ENCODE measurements at regions of chr19 and their contacts with region 1.

Region 1: DNA sequence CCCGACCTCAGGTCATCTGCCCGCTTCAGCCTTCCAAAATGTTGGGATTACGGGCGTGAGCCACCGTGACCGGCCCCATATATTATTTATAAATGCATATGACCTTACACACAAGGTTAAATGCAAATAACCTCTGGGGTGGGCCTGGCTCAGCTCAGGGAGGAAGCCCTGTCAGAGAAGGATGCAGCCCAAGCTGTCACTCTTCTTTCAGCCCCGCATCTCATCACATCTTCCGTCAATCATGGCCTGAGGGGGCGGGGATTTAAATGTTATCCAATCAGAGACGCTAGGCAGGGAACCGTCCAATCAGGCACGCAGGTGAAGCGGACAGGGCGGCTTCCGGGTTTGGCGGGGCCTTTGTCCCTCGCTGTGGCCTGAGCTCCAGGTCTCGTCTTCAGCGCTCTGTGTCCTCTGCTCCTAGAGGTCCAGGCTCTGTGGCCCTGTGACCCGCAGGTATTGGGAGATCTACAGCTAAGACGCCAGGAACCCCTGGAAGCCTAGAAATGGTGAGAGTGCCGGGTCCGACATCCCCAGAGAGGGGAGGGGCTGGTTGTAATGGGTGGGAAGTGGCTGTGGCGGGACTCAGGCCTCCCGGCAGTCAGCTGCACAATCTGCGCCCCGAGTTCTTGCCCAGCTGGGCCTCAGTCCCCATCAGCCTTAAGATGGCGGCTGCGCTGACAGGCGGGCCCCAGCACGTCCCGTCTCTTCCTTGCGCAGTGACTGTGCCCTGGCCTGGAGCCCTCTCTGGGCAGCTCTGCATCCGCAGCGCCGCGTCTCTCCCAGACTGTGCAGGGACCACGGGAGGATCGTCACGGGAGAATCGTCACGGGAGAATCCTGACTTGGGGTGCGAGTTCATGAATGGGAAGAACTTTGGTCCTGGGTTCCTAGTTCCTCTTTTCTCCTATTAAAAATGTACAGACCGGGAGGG is at the start of gene ZNF430:
- DNase-seq: peak; percentile 97
- H3K4me3 Mint-ChIP-seq: peak within 1 kb of the TSS; percentile 100
- H3K27ac Mint-ChIP-seq: peak within 1 kb of the TSS; percentile 99
- H3K4me1 Mint-ChIP-seq: peaks cover 41% of the 10 kb centered on the region
- H3K27me3 Mint-ChIP-seq: no peaks in the 10 kb centered on the region
- total RNA-seq, gene ZNF430: 18.9 to 20.9 TPM

Region 2: GRCh38 chr19:20661150-20661819 is 359.3 kb before region 1 on chr19 and contains the start of gene ZNF626:
- CTCF ChIA-PET with region 1: no interaction called
- POLR2A ChIA-PET with region 1: interaction called, 5 read pairs
- intact Hi-C with region 1: loop called (anchors 10 kb)
- DNase-seq: peak; percentile 96
- H3K4me3 Mint-ChIP-seq: peak within 1 kb of the TSS; percentile 91
- H3K27ac Mint-ChIP-seq: peak within 1 kb of the TSS; percentile 90
- H3K4me1 Mint-ChIP-seq: peaks cover 43% of the 10 kb centered on the region
- H3K27me3 Mint-ChIP-seq: no peaks in the 10 kb centered on the region
- total RNA-seq, gene ZNF626: 8.7 to 12.5 TPM

Region 3: DNA sequence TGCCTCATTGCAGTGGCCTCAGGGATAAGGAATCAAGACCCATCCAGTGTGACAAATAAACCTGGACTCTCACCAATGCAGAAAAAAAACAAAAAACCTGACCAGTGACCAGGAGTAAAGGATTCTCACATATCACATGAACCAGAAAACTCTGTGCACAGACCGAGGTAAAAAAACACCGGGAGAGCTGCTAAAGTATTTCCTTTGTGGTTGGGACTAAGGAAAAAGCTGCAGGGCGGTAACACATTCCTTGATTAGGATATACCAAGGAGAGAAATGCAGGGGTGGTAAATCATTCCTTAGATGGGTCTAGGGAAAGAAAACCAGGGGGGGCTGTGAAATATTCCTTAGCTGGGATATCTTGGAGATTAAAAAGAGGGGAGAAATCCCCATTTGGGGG is 162.3 kb before region 1 on chr19:
- CTCF ChIA-PET with region 1: no interaction called
- POLR2A ChIA-PET with region 1: no interaction called
- intact Hi-C with region 1: no loop called
- DNase-seq: no peak
- H3K4me3 Mint-ChIP-seq: no peak overlapping the region
- H3K27ac Mint-ChIP-seq: no peak overlapping the region
- H3K4me1 Mint-ChIP-seq: no peaks in the 10 kb centered on the region
- H3K27me3 Mint-ChIP-seq: no peaks in the 10 kb centered on the region

Region 4: GRCh38 chr19:20923077-20923871 is 97.3 kb before region 1 on chr19 and contains the start of gene ZNF85:
- CTCF ChIA-PET with region 1: interaction called, 4 read pairs
- POLR2A ChIA-PET with region 1: interaction called, 9 read pairs
- intact Hi-C with region 1: loop called (anchors 1 kb)
- DNase-seq: peak; percentile 95
- H3K4me3 Mint-ChIP-seq: peak within 1 kb of the TSS; percentile 98
- H3K27ac Mint-ChIP-seq: peak within 1 kb of the TSS; percentile 94
- H3K4me1 Mint-ChIP-seq: peaks cover 23% of the 10 kb centered on the region
- H3K27me3 Mint-ChIP-seq: no peaks in the 10 kb centered on the region
- total RNA-seq, gene ZNF85: 15.4 to 18.5 TPM

Region 5: GRCh38 chr19:21047716-21048115 is 27.2 kb after region 1 on chr19:
- CTCF ChIA-PET with region 1: no interaction called
- POLR2A ChIA-PET with region 1: no interaction called
- intact Hi-C with region 1: no loop called
- DNase-seq: no peak
- H3K4me3 Mint-ChIP-seq: no peak overlapping the region
- H3K27ac Mint-ChIP-seq: no peak overlapping the region
- H3K4me1 Mint-ChIP-seq: peaks cover 8% of the 10 kb centered on the region
- H3K27me3 Mint-ChIP-seq: no peaks in the 10 kb centered on the region

Region 6: DNA sequence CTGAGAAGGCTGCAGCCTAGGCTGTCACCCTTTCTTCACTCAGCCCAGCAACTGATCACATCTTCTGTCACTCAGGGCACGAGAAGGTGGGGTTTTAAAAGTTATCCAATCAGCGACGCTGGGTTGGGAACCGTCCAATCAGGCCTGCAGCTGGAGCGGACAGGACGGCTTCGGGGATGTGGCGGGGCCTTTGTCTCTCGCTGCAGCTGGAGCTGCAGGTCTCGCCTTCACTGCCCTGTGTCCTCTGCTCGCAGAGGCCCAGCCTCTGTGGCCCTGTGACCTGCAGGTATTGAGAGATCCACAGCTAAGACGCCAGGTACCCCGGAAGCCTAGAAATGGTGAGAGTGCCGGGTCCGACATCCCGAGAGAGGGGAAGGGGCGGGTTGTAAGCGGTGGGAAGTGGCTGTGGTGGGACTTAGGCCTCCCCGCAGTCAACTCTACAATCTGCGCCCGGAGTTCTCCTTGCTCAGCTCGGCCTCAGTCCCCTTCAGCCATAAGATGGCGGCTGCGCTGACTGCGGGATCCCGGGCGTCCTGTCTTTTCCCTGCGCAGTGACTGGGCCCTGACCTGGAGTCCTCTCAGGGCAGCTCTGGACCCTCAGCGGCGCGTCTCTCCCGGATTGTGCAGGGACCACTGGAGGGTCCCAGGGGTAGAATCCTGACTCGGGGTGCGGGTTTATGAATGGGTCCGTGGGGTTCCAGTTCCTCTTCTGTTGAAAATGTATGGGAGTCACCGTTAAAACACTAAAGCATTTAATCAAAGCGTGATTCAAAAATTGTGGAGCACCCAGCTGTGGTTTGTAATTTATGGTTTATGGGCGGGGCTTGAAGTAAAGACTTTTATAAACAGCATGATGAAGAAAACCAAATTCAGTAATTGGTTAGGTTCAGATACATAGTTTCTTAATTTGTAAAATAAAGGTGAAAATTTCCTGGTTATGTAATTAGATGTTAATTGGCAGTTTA is 61.7 kb after region 1 on chr19 and contains the start of gene ZNF714:
- CTCF ChIA-PET with region 1: no interaction called
- POLR2A ChIA-PET with region 1: interaction called, 6 read pairs
- intact Hi-C with region 1: loop called (anchors 2 kb)
- DNase-seq: peak; percentile 91
- H3K4me3 Mint-ChIP-seq: peak within 1 kb of the TSS; percentile 100
- H3K27ac Mint-ChIP-seq: peak within 1 kb of the TSS; percentile 94
- H3K4me1 Mint-ChIP-seq: peaks cover 31% of the 10 kb centered on the region
- H3K27me3 Mint-ChIP-seq: no peaks in the 10 kb centered on the region
- total RNA-seq, gene ZNF714: 17.9 to 18.0 TPM

Region 7: DNA sequence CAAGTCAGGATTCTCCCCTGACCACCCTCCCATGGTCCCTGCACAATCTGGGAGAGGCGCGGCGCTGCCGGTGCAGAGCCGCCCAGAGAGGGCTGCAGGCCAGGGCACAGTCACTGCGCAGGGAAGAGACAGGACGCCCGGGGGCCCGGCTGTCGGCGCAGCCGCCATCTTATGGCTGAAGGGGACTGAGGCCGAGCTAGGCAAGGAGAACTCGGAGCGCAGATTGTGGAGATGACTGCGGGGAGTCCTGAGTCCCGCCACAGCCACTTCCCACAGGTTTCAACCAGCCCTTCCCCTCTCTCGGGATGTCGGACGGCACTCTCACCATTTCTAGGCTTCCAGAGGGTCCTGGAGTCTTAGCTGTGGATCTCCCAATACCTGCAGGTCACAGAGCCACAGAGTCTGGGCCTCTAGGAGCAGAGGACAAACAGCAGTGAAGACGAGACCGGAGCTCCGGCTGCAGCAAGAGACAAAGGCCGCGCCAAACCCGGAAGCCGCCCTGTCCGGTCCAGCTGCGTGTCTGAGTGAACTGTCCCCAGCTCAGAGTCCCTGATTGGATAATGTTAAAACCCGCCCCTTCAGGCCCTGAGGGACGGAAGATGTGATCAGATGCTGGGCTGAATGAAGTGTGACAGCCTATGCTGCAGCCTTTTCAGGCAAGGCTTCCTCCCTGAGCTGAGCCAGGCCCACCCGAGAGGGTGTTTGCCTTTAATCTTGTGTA is 308.5 kb after region 1 on chr19 and contains the start of gene ZNF708:
- CTCF ChIA-PET with region 1: no interaction called
- POLR2A ChIA-PET with region 1: interaction called, 4 read pairs
- intact Hi-C with region 1: loop called (anchors 10 kb)
- DNase-seq: peak; percentile 89
- H3K4me3 Mint-ChIP-seq: peak within 1 kb of the TSS; percentile 96
- H3K27ac Mint-ChIP-seq: peak within 1 kb of the TSS; percentile 99
- H3K4me1 Mint-ChIP-seq: peaks cover 33% of the 10 kb centered on the region
- H3K27me3 Mint-ChIP-seq: no peaks in the 10 kb centered on the region
- total RNA-seq, gene ZNF708: 10.1 to 11.1 TPM

Region 8: DNA sequence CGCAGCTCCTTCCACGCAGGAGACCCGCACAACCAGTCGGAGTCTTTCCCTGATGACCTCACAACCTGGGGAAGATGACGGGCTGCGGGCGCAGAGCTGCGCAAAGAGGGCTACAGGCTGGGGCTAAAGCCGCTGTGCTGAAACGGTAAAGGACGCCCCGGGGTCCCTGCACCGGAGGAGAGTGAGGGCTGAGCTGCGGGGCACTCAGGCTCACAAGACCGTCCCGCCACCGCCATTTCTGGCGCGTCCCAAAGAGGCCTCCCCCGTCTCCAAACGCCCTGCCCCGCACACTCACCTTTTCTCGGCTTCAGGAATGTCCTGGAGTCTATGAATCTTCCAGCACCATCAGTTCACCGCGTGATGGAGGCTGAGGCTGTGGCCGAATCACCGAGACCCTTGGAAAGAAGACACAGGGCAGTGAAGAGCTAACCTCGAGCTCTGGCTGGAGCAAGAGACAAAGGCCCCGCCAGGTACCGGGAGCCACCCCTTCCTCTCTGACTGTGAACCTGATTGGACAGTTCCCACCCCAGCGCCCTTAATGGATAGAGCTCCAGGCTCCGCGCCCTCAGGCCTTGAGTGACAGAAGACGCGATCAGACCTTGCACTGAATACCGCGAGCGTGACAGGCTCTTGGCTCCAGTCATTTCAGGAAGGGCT is 443.0 kb after region 1 on chr19:
- CTCF ChIA-PET with region 1: no interaction called
- POLR2A ChIA-PET with region 1: no interaction called
- intact Hi-C with region 1: no loop called
- DNase-seq: peak; percentile 75
- H3K4me3 Mint-ChIP-seq: peak overlapping the region; percentile 85
- H3K27ac Mint-ChIP-seq: no peak overlapping the region
- H3K4me1 Mint-ChIP-seq: peaks cover 4% of the 10 kb centered on the region
- H3K27me3 Mint-ChIP-seq: peaks cover 13% of the 10 kb centered on the region

Region 9: GRCh38 chr19:21505459-21506451 is 485.2 kb after region 1 on chr19 and contains the start of gene ZNF429:
- CTCF ChIA-PET with region 1: no interaction called
- POLR2A ChIA-PET with region 1: no interaction called
- intact Hi-C with region 1: loop called (anchors 2 kb)
- DNase-seq: peak; percentile 94
- H3K4me3 Mint-ChIP-seq: peak within 1 kb of the TSS; percentile 100
- H3K27ac Mint-ChIP-seq: peak within 1 kb of the TSS; percentile 99
- H3K4me1 Mint-ChIP-seq: peaks cover 33% of the 10 kb centered on the region
- H3K27me3 Mint-ChIP-seq: no peaks in the 10 kb centered on the region
- total RNA-seq, gene ZNF429: 9.0 to 9.5 TPM